Activated CD4-positive, alpha-beta T cell treated with anti-CD3 and anti-CD28 coated beads for 36 hours (primary cell): ENCODE measurements at regions of chr12 and their contacts with region 1.

Region 1: GRCh38 chr12:6867413-6868210 is at the start of gene TPI1:
- DNase-seq: peak; percentile 91
- ATAC-seq: peak; percentile 68
- H3K4me3 Mint-ChIP-seq: peak within 1 kb of the TSS; percentile 93
- H3K27ac Mint-ChIP-seq: peak within 1 kb of the TSS; percentile 95
- H3K4me1 Mint-ChIP-seq: peaks cover 47% of the 10 kb centered on the region
- H3K27me3 Mint-ChIP-seq: no peaks in the 10 kb centered on the region
- total RNA-seq, gene TPI1: 1,824 to 2,753 TPM

Region 2: GRCh38 chr12:6613776-6614512 is 253.7 kb before region 1 on chr12:
- CTCF ChIA-PET with region 1: no interaction called
- POLR2A ChIA-PET with region 1: no interaction called
- intact Hi-C with region 1: no loop called
- DNase-seq: peak; percentile 51
- ATAC-seq: peak; percentile 30
- H3K4me3 Mint-ChIP-seq: no peak overlapping the region
- H3K27ac Mint-ChIP-seq: peak overlapping the region; percentile 10
- H3K4me1 Mint-ChIP-seq: peaks cover 41% of the 10 kb centered on the region
- H3K27me3 Mint-ChIP-seq: no peaks in the 10 kb centered on the region

Region 3: DNA sequence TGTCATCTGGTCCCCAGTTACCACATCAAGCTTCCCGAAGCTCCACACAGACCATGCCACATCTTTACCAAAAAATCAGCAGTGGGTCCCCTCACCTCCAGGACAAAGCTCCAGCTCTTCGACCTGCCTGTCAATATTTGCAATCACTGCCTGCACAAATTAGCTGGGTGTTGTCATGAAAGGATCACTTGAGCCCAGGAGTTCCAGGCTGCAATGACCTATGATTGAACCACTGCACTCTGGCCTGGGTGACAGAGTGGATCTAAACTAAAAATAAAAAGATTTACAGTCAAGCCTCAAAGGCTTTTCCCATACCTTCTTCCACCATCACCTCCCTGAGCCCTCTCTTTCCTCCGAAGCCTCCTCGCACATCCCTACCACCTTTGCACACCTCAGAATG is 71.0 kb before region 1 on chr12:
- CTCF ChIA-PET with region 1: no interaction called
- POLR2A ChIA-PET with region 1: no interaction called
- intact Hi-C with region 1: no loop called
- DNase-seq: no peak
- ATAC-seq: no peak
- H3K4me3 Mint-ChIP-seq: no peak overlapping the region
- H3K27ac Mint-ChIP-seq: no peak overlapping the region
- H3K4me1 Mint-ChIP-seq: peaks cover 60% of the 10 kb centered on the region
- H3K27me3 Mint-ChIP-seq: no peaks in the 10 kb centered on the region

Region 4: DNA sequence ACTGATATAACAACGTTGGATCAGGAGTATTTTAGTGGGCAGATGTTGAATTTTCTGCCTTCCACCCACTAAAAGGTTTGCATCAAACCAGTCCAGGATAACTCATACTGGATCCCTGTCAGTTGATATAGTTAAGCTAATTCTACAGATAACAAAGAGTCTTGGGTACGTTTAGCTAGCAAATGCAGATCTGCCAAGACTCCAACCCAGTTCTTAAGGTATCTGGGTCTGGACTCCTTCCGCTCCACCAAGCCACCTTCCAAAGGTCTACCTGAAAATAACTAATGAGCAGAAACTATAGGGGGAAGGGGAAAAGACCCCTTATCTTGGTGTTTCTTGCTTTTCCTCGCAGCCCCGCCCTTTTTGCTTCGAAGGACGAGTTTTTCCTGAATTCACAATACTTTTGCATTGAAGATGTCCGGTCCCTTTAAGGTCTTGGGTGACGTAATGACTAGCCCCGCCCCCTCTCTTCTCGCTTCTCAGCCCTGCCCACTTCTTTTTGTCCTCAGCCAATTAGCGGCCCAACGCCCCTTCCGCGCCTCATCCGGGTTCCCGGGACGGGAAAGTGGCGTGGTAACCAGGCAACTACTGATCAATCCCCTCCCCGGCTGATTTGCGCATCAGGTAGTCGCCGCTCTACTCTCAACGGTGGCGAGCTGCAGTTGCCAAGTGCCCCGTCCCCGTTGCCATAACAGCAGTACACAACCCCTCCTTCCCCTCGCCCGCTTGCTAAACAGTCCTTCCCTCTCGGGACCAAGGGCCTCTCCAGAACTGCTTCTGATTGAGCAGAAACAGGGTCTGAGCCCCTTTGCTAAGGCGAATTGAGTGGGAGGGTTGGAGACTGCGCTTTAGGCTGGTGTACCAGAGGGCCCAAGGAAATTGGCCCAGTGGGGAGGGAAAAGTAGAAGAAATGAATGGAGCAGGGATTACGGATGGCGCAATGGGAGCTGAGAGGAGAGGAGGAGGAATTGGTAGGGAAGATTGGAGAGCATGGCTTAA is 37.0 kb after region 1 on chr12 and contains the start of gene LRRC23:
- CTCF ChIA-PET with region 1: interaction called, 23 read pairs
- POLR2A ChIA-PET with region 1: interaction called, 4 read pairs
- intact Hi-C with region 1: loop called in 1 of 2 experiments (anchors 5 kb)
- DNase-seq: peak; percentile 99
- ATAC-seq: peak; percentile 97
- H3K4me3 Mint-ChIP-seq: no peak within 1 kb of the TSS
- H3K27ac Mint-ChIP-seq: no peak within 1 kb of the TSS
- H3K4me1 Mint-ChIP-seq: peaks cover 14% of the 10 kb centered on the region
- H3K27me3 Mint-ChIP-seq: no peaks in the 10 kb centered on the region
- total RNA-seq, gene LRRC23: 6.4 to 7.0 TPM

Region 5: DNA sequence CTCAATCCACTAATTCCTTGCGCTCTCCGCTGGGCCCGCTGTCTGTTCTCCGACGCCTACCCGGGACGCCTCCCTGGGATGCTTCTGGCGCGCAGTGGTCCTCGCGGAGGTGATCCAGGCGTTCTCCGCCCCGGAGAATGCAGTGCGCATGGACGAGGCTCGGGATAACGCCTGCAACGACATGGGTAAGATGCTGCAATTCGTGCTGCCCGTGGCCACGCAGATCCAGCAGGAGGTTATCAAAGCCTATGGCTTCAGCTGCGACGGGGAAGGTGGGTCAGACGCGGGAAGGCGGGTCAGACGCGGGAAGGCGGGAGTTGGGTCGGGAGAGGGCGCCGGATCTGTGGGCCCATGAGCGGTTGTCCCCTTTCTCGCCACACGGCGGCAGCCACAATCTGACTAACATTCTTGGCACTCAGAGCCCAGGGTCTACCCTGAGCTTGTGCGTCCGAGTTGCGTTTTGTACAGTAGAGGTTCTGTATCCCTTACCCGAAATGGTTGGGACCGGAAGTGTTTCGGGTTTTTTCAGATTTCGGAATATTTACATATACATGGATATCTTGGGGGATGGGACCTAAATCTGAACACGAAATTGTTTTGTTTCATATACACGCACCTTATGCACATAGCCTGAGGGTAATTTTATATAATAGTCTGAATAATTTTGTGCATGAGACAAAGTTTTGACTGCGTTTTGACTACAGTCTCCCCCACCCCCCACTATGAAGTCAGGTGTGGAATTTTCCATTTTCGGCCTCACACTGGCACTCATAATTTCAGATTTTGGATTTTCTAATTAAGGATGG is 77.0 kb after region 1 on chr12:
- CTCF ChIA-PET with region 1: interaction called, 9 read pairs
- POLR2A ChIA-PET with region 1: interaction called, 27 read pairs
- intact Hi-C with region 1: loop called (anchors 1 to 5 kb)
- DNase-seq: peak; percentile 94
- ATAC-seq: peak; percentile 54
- H3K4me3 Mint-ChIP-seq: peak overlapping the region; percentile 81
- H3K27ac Mint-ChIP-seq: peak overlapping the region; percentile 97
- H3K4me1 Mint-ChIP-seq: peaks cover 59% of the 10 kb centered on the region
- H3K27me3 Mint-ChIP-seq: no peaks in the 10 kb centered on the region

Region 6: DNA sequence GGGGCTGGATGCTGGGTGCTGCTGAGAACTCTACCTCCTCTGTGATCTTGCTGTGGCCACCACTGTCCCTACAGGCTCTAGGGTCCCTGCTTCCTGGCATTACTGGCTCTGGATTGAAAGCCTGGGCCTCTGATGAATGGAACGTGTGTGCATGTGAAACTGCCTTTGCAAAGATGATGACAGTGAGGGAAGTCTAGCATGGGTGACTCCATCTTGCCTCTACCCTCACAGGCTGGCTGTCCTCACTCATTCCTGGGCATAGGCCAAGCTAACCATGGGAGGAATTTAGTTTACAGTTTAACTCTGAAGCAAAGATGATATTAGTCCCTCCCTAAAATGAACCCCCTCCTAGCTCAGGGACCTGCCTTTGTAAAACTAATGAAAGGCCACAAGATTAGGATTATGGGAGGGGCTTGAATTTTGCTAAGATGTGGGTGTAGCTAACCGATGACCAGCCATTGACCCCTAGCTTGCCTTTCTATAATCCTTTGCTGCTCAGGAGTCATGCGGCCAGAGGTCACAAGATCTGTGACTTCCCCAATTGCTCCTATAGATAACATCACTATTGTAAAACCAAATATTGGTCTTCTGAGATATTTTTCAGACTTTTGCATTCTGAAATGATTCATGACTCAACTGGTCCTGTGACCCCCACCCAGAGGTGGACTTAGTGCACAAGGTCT is 190.7 kb after region 1 on chr12:
- CTCF ChIA-PET with region 1: no interaction called
- POLR2A ChIA-PET with region 1: no interaction called
- intact Hi-C with region 1: no loop called
- DNase-seq: no peak
- ATAC-seq: no peak
- H3K4me3 Mint-ChIP-seq: no peak overlapping the region
- H3K27ac Mint-ChIP-seq: no peak overlapping the region
- H3K4me1 Mint-ChIP-seq: no peaks in the 10 kb centered on the region
- H3K27me3 Mint-ChIP-seq: peaks cover 14% of the 10 kb centered on the region